Cardiac septum (tissue), 1 donor: ENCODE measurements at regions of chr1 and their contacts with region 1.

Region 1: DNA sequence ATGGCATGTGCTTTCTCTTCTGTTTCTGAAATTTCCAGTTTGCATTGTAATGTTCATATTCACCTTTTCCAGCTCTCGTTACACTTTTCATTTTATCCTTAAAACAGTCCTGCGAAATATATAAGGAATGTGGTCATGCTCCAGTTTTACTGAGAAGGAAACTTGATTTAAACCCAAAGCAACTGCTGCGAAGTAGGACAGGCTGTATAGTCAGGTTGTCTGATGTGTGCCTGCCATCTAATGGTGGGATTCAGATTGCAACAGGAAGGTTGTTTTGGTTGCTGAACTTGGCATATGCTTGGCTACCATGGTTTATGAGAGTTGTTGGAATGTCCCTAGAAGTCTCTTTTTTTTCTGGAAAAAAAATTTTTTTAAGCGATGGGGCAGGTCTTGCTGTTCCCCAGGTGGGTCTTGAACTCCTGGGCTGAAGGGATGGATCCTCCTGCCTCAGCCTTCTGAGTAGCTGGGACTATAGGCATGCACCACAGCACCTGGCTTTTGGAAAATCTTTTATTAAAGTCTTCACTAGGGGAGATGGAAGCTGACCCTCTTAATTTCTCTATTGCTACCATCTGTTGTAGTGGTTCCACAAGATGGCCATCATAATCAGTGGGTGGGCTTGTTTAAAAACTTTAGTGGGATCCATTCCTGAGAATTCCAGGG is 86.9 kb downstream of the UCK2 start:
- DNase-seq: no peak

Region 2: DNA sequence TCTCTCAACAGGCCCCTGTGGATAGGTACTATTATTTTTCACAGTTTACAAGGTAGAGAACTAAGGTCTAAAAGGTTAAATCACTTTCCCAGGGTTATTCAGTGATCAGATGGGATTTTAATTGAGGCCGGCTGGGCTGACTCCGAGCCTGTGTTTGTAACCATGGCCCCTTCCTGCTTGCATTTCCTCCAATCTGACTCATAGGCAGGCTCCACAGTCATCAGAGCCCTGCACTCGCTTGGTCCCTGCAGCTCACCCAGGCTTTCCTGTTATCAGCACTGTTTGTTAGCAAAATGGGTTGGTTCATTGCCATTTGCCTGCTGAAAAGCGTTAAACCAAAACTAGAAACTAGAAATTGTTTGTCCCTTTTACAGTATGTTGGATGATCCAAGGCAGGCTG is 516.3 kb before region 1 on chr1:
- intact Hi-C with region 1: loop called (anchors 5 kb)
- DNase-seq: no peak

Region 3: DNA sequence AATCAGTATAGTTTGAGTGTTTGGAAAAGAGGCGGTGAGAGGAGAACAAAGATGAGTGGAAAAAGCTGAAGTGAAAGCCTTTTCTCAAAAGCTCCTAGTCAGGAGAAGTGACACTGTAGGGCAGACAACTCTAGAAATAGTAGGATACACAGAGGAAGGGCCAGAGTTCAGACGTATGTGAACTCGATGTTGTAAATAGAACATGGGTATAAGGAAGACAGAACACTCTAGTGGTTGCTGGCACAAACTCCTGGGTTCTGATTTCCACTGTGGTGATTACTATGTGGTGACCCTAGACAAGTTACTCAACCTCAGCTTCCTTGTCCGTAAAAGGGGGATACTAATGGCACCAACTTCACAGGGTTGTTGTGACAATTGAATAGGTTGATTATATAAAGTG is 313.5 kb before region 1 on chr1:
- intact Hi-C with region 1: loop called (anchors 2 kb)
- DNase-seq: no peak

Region 4: GRCh38 chr1:165717918-165718515 is 196.2 kb before region 1 on chr1:
- intact Hi-C with region 1: loop called (anchors 2 kb)
- DNase-seq: no peak

Region 5: DNA sequence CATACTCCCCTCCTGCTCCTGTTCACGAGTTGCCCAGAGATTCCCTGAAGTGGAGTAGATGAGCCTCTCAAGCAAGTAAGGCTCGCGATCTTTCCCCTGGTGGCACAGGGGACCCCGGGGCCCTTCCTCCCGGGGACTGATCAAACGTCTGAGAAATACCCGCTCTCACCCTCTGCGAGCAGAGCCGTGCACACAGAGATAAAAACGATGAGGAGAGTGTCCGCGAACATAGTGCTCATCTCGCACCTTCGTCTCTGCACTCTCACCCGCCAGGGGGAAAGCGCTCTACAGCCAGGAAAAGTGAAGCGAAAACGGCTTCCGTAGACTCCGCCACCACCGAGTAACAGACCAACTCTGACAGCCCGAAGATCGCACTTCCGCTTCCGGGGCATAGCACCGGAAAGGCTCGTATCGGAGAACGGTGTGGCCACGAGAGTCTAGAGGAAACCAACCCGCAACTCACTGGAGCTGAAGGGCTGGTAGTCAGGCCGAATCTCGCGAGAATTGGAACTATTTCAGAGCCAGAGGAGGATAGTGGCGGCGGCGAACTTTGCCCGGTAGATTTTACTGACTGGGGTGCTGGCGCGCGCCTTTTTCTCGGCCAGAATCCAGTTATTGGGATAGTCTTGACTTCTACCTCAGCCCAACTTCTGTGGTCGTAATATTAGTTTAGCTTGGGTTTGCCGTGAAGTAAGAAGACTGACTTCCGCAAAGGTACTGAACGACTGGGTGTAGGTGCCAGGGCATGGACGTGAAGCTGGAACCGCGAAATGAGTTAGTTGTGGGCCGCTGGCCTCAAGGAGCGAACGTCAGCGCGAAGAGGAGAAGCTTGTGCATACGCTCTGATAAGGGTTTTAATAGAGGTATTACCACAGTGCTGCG is 145.5 kb before region 1 on chr1 and contains the start of gene TMCO1:
- intact Hi-C with region 1: loop called (anchors 5 kb)
- DNase-seq: peak; percentile 98
- total RNA-seq, gene TMCO1: 53.4 TPM

Region 6: GRCh38 chr1:165827268-165828102 is 86.8 kb before region 1 on chr1 and contains the start of gene UCK2:
- intact Hi-C with region 1: loop called (anchors 5 kb)
- DNase-seq: peak; percentile 91
- total RNA-seq, gene UCK2: 32.0 TPM